ENCODE measurements at regions of chr2 and their contacts with region 1.

Region 1: GRCh38 chr2:238160206-238161109 is 1.7 kb downstream of the ERFE start:
- DNase-seq: peak; percentile 45 to 71
- ATAC-seq: no peak
- H3K4me3 ChIP-seq: no peak overlapping the region
- H3K27ac ChIP-seq: no peak overlapping the region
- H3K4me1 ChIP-seq: no peaks in the 10 kb centered on the region
- H3K27me3 ChIP-seq: no peaks in the 10 kb centered on the region

Region 2: DNA sequence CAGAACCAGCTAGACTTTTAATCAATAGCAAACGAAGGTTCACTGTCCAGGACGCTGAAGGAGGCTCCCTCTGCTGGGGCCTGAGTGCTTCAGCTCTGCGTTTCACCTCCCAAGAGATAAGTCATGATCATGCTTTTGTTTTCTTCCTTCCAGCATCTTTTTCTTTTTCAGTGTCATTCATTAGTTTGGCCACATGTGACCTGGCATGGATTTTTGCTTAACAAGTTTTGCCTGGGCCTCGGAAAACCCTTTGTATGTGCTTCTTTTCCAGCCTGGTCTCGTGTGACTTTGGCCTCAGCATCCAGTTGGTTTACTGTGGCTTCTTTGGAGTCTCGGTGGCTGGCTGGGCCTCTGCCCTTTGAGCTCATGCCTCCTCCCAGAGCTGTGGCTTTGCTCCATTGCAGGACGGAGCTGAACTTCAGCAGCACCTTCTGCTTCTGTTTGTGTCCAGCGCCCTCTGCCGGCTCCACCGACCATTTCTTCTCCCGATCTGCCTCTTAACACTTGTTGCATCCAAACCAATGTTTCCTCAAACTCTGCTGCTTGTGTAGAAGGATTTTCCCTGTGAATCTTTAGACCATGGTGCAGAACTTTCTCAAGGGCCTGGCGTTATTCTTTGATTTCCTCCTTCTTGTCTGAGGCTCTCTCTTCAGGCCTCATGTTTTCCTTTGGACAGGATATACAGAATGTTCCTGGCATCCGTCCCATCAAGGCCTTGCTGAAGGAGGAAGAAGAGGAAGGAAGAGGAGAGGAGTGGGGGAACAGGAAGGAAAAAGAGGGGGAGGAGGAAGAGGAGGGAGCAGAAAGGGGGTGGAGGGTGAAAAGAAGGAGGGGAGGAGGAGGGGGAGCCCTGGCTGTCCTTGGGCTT is 103.0 kb after region 1 on chr2:
- intact Hi-C with region 1: loop called (anchors 5 to 10 kb)
- DNase-seq: peak; percentile 95 to 97
- ATAC-seq: peak; percentile 89
- H3K4me3 ChIP-seq: no peak overlapping the region
- H3K27ac ChIP-seq: no peak overlapping the region
- H3K4me1 ChIP-seq: no peaks in the 10 kb centered on the region
- H3K27me3 ChIP-seq: no peaks in the 10 kb centered on the region

Measured in aorta (tissue), 5 donors.